ENCODE measurements at regions of chr5 and their contacts with region 1.

Region 1: GRCh38 chr5:58849921-58850667 is 267.2 kb downstream of the RAB3C start:
- DNase-seq: peak in 2 of 4 experiments; percentile 10 to 20
- ATAC-seq: peak; percentile 66
- H3K4me3 ChIP-seq: no peak overlapping the region
- H3K27ac ChIP-seq: no peak overlapping the region
- H3K4me1 ChIP-seq: no peaks in the 10 kb centered on the region
- H3K27me3 ChIP-seq: no peaks in the 10 kb centered on the region
- CTCF ChIP-seq: peak in 2 of 3 experiments; percentile 31 to 42; a peak in 3 of 6 replicates
- EP300 ChIP-seq: no peak
- POLR2A ChIP-seq: no peak
- RAD21 ChIP-seq: peak; percentile 41 to 60

Region 2: DNA sequence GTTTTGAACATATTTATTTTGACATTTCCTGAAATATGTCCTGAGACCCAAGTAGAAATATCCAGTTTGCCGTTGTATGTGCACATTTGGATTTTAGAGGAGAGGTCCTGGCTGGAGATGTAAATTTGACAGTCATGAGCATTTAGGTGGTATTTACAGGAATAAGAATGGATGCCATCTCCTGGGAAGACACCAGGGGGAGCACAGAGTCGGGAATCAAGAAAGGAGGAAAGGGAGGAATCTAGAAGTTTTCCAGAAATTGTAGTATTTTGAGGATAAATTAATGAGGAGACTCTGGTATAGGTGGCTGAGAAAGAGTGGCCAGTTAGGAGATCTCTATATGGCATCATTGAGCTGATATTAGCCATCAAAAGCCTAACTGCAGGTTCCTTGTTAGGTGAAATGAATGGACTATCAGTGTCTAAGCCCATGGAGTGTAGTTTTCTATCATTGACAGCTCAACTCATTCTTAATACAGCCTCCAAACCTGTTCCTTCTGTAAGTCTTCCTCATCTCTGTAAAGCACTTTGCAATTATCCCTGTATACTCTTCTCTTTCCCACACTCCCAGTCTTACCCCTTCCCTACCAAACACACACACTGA is 351.7 kb before region 1 on chr5:
- CTCF ChIA-PET with region 1: interaction called, 4 read pairs
- POLR2A ChIA-PET with region 1: interaction called, 5 read pairs
- in situ Hi-C with region 1: no loop called
- intact Hi-C with region 1: loop called (anchors 5 kb)
- DNase-seq: peak; percentile 9 to 20 (median 14)
- ATAC-seq: no peak
- H3K4me3 ChIP-seq: no peak overlapping the region
- H3K27ac ChIP-seq: no peak overlapping the region
- H3K4me1 ChIP-seq: no peaks in the 10 kb centered on the region
- H3K27me3 ChIP-seq: no peaks in the 10 kb centered on the region
- CTCF ChIP-seq: peak; percentile 18 to 44 (median 35); a peak in 4 of 6 replicates
- EP300 ChIP-seq: no peak
- POLR2A ChIP-seq: no peak
- RAD21 ChIP-seq: peak; percentile 21 to 48; a peak in 2 of 4 replicates